CD8-positive, alpha-beta T cell (primary cell): ENCODE measurements at regions of chr1 and their contacts with region 1.

Region 1: DNA sequence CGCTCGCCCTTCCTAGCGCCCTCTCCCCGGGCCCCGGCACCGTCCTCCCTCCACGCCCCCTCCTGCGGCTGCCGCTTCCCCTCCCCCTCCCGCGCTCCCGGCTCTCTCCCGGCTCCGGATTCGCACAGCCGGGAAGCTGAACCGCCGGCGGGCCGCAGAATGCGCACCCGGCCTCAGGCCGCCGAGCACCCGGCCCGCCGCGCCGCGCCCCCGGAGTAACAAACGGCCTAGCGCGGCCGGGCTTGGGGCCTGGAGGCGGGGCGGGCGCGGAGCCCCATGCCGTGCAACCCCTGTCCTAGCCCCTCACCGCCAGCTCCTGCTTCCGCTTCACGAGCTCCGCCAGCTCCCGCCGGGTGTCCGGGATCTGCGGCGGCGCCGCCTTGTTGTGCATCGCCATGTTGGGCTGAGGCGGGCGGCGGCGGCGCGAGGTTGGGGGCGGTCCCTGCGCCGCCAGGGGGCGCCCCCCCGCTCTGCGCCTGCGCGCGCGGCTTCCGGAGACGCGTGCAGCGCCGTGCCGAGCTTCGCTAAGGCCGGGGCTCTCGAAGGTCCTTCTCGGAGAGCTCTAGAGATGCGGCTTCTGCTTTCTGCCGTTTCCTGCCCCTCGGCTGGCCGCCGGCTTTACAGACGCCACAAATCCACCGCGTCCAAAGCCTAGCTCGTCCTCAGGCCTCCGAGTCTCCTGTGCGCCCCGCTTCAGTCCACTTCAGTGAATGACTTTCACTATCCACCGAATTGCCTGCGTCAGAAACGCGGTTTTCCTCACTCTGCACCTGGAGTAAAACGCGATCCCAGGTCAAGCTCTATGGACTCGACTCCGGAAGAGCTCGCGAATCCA is at the start of gene MEAF6:
- DNase-seq: peak; percentile 68 to 92 (median 83)
- ATAC-seq: peak; percentile 94
- H3K4me3 ChIP-seq: peak within 1 kb of the TSS; percentile 59 to 67
- H3K4me3 Mint-ChIP-seq: peak within 1 kb of the TSS; percentile 97
- H3K27ac ChIP-seq: peak within 1 kb of the TSS; percentile 78 to 79
- H3K27ac Mint-ChIP-seq: peak within 1 kb of the TSS; percentile 97
- H3K4me1 ChIP-seq: peaks cover 30% of the 10 kb centered on the region
- H3K4me1 Mint-ChIP-seq: peaks cover 44% of the 10 kb centered on the region
- H3K27me3 ChIP-seq: no peaks in the 10 kb centered on the region
- H3K27me3 Mint-ChIP-seq: no peaks in the 10 kb centered on the region
- CTCF ChIP-seq: peak; percentile 72
- total RNA-seq, gene MEAF6: 43.4 to 46.0 TPM

Region 2: DNA sequence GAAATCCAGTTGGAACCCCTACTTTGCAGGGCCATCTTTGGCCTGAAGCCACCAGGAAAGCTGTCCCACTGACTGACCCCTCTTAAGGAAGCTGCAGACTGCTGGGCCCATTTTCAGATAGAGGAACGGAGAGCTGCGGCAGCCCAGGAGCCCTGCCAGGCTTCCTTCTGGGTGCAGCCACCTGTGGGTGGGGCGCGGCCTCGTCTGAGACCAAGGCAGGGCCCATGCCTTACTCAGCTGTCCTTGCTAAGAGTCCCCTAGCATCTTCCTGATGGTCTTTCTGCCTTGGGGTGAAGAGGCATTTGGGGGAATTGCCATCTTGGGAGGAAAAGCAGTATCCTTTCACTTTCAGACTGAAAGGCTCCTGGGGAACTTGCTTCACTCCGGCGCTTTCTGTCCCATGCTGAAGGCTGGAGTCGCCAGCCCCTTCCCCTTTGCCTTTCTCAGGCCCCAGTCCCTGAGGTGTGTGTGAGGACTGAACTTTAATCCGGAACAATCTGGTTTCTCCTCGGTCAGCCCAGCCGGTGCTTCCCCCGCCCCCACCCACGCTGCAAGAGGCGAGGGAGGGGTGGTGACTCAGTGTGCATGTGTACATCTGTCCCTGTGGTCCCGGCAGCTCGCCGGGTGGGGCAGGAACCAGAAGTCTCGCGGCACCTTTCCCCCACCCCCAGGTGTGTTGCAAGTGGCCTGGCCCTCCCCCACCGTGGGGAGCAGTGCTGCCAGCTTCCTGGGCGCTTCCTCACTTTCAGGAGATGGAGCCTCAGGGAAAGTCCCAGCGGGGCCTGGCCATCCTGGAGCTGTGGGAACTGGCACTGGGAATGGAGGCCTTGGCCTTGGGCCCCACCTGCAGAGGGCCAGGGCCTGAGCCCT is 35.1 kb before region 1 on chr1:
- CTCF ChIA-PET with region 1: interaction called, 5 read pairs
- POLR2A ChIA-PET with region 1: interaction called, 27 read pairs
- intact Hi-C with region 1: loop called (anchors 1 kb)
- DNase-seq: peak; percentile 62 to 95 (median 91)
- ATAC-seq: peak; percentile 55
- H3K4me3 ChIP-seq: peak overlapping the region; percentile 93 to 95
- H3K4me3 Mint-ChIP-seq: peak overlapping the region; percentile 95
- H3K27ac ChIP-seq: peak overlapping the region; percentile 95 to 99
- H3K27ac Mint-ChIP-seq: peak overlapping the region; percentile 99
- H3K4me1 ChIP-seq: peaks cover 39% of the 10 kb centered on the region
- H3K4me1 Mint-ChIP-seq: peaks cover 42% of the 10 kb centered on the region
- H3K27me3 ChIP-seq: no peaks in the 10 kb centered on the region
- H3K27me3 Mint-ChIP-seq: no peaks in the 10 kb centered on the region
- CTCF ChIP-seq: no peak

Region 3: GRCh38 chr1:37553927-37554808 is 39.6 kb after region 1 on chr1 and contains the start of gene SNIP1:
- CTCF ChIA-PET with region 1: interaction called, 7 read pairs
- POLR2A ChIA-PET with region 1: interaction called, 10 read pairs
- intact Hi-C with region 1: loop called (anchors 1 kb)
- DNase-seq: peak; percentile 84 to 96 (median 91)
- ATAC-seq: peak; percentile 95
- H3K4me3 ChIP-seq: peak within 1 kb of the TSS; percentile 88 to 97
- H3K4me3 Mint-ChIP-seq: peak within 1 kb of the TSS; percentile 100
- H3K27ac ChIP-seq: peak within 1 kb of the TSS; percentile 88 to 91
- H3K27ac Mint-ChIP-seq: peak within 1 kb of the TSS; percentile 100
- H3K4me1 ChIP-seq: peaks cover 24% of the 10 kb centered on the region
- H3K4me1 Mint-ChIP-seq: peaks cover 43% of the 10 kb centered on the region
- H3K27me3 ChIP-seq: no peaks in the 10 kb centered on the region
- H3K27me3 Mint-ChIP-seq: peaks cover 2% of the 10 kb centered on the region
- CTCF ChIP-seq: no peak
- total RNA-seq, gene SNIP1: 71.7 to 84.2 TPM

Region 4: DNA sequence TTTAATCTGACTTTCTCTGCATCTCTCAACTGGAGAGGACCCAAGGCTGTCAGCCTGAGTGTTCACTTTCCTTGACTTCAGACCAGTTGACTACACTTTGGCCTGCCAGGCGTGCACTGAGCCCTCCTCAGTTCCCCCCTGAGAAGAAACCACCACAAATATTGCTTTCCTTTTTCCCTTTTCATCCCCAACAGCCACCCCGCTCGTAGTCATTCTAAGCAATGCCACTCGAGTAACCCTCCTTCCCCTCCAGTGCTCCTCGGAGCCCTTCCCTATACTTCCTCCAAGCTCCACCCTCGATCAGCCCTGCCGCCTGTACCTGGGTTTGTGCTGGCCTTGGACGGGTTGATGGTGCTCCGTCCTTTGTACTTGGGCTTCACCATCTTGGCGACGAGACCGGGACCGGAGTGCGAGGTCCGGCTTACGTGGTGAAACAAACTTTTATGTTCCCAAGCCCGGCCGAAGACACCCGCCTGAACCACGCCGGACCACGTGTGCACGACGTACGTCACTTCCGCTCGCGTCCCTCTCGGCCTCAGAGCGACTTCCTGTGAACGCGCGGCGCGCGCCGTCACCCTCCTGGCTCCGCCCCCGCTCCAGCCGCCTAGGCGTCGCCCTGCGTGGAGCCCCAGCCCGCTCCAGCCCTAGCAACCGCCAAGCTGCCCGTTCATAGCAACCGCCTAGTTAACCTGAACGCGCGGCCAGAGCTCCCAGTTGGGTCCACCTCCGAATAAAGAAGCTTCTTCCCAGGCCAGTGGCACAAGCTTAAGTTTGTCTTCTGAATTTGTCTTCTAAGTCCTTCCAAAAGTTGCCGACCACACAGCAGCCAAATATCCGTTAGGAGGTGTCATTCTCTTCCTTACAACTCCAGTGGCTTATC is 81.1 kb after region 1 on chr1 and contains the start of gene GNL2:
- CTCF ChIA-PET with region 1: interaction called, 3 read pairs
- POLR2A ChIA-PET with region 1: interaction called, 4 read pairs
- intact Hi-C with region 1: loop called (anchors 2 kb)
- DNase-seq: peak; percentile 92 to 99 (median 96)
- ATAC-seq: peak; percentile 95
- H3K4me3 ChIP-seq: peak within 1 kb of the TSS; percentile 67 to 88
- H3K4me3 Mint-ChIP-seq: peak within 1 kb of the TSS; percentile 100
- H3K27ac ChIP-seq: peak within 1 kb of the TSS; percentile 68 to 93
- H3K27ac Mint-ChIP-seq: peak within 1 kb of the TSS; percentile 99
- H3K4me1 ChIP-seq: peaks cover 23% of the 10 kb centered on the region
- H3K4me1 Mint-ChIP-seq: peaks cover 36% of the 10 kb centered on the region
- H3K27me3 ChIP-seq: no peaks in the 10 kb centered on the region
- H3K27me3 Mint-ChIP-seq: no peaks in the 10 kb centered on the region
- CTCF ChIP-seq: no peak
- total RNA-seq, gene GNL2: 54.6 to 55.2 TPM

Region 5: GRCh38 chr1:37634244-37634991 is 119.9 kb after region 1 on chr1 and contains the start of gene RSPO1:
- CTCF ChIA-PET with region 1: no interaction called
- POLR2A ChIA-PET with region 1: no interaction called
- intact Hi-C with region 1: no loop called
- DNase-seq: no peak
- ATAC-seq: no peak
- H3K4me3 ChIP-seq: no peak within 1 kb of the TSS
- H3K4me3 Mint-ChIP-seq: peak within 1 kb of the TSS; percentile 45
- H3K27ac ChIP-seq: no peak within 1 kb of the TSS
- H3K27ac Mint-ChIP-seq: no peak within 1 kb of the TSS
- H3K4me1 ChIP-seq: no peaks in the 10 kb centered on the region
- H3K4me1 Mint-ChIP-seq: peaks cover 10% of the 10 kb centered on the region
- H3K27me3 ChIP-seq: peaks cover 13 to 22% of the 10 kb centered on the region in 2 experiments
- H3K27me3 Mint-ChIP-seq: peaks cover 65% of the 10 kb centered on the region
- CTCF ChIP-seq: no peak
- total RNA-seq, gene RSPO1: not detected